A673 (cell line): ENCODE measurements at regions of chr7 and their contacts with region 1.

Region 1: DNA sequence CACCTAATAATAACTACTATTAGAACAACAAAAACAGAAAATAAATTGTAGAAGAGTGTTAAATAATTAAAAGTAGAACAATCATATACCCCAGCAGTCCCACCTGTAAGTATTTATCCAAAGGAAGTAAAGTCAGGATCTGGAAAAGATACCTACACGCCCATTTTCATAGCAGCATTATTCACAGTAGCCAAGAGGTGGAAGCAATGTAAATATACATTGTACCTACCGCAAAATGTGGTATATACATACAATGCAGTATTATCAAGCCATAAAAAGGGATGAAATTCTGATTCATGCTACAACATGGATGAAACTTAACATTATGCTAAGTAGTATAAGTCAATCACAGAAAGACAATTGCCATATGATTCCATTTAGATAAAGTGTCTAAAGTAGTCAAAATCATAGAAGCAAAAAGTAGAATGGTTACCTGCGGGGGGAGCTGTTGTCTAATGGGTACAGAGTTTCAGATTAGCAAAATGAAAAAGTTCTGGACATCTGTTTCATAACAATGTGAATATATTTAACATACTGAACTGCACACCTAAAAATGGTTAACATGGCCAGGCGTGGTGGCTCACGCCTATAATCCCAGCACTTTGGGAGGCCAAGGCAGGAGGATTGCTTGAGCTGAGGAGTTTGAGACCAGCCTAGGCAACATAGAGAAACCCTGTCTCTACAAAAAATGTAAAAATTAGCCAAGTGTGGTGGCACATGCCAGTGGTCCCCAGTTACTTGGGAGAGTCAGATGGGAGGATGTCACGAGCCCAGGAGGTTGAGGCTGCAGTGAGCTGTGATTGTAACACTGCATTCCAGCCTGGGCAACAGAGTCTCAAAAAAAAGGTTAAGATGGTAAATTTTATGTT is 6.0 kb upstream of the TMED4 start:
- DNase-seq: peak; percentile 67
- H3K4me3 ChIP-seq: no peak overlapping the region
- H3K27ac ChIP-seq: no peak overlapping the region
- H3K4me1 ChIP-seq: no peaks in the 10 kb centered on the region
- H3K27me3 ChIP-seq: no peaks in the 10 kb centered on the region
- CTCF ChIP-seq: peak; percentile 67

Region 2: DNA sequence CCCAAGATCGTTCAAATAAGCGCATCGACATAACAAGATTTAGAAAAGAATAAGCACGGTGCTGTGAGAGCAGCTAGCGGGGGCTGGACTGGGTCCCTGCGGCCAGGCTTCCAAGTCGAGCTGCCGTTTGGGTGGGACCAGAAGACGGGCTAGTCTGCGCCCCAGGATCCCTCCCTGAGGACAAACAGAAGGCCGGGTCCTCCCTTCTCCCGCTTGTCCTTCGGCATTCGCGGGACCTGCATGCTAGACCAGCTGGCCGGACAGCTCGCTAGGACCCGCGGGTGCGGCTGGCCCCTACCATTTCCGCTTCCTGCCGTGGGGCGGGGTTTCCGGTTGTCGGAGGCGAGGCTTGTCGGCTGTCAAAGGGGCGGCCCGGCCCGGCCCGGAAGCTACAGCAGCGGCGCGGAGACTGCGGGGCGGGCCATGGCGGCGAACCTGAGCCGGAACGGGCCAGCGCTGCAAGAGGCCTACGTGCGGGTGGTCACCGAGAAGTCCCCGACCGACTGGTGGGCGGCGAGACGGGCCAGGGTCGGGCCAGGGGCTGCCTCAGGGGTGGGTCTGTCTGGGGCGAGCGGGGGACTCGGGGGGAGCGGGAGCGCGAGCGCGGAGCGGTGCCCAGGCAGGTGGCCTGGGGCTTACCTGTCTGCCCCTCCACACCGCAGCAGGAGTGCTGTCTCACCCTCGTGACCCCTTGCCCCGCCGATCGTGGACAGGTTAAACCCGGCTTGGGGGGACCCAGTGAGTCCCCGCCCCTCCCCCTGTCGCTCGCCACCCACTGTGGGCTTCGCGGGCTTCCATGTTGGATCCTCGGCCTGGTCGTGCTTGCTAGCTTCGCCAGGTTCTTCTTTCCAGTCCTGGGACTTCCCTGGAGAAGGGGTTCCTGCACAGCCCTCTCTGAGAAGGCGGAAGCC is 543.5 kb before region 1 on chr7 and contains the start of gene DBNL:
- CTCF ChIA-PET with region 1: no interaction called
- POLR2A ChIA-PET with region 1: no interaction called
- intact Hi-C with region 1: no loop called
- DNase-seq: peak; percentile 91
- H3K4me3 ChIP-seq: peak within 1 kb of the TSS; percentile 90
- H3K27ac ChIP-seq: peak within 1 kb of the TSS; percentile 79
- H3K4me1 ChIP-seq: peaks cover 8% of the 10 kb centered on the region
- H3K27me3 ChIP-seq: no peaks in the 10 kb centered on the region
- CTCF ChIP-seq: no peak
- total RNA-seq, gene DBNL: 64.5 and 74.4 TPM in 2 replicates

Region 3: DNA sequence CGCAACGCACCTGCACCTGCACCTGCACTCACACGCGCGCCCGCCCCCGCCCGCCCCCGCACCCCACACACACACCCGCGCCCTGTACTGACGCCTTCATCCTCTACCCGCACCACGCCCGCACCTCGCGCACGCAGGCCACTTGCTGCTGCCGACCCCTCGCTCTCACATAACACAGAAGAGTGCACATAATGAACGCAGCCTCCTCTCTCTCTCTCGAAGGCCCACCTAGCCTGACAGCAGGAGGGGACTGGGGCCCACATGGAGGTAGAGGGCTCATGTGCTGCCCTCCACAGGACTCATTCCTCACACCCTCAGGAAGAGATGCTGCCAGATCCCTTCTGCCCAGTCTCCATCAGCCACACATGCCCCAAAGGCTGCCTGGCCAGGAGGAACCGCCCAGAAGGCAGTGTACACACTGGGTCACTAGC is 262.3 kb before region 1 on chr7:
- CTCF ChIA-PET with region 1: no interaction called
- POLR2A ChIA-PET with region 1: no interaction called
- intact Hi-C with region 1: no loop called
- DNase-seq: no peak
- H3K4me3 ChIP-seq: no peak overlapping the region
- H3K27ac ChIP-seq: no peak overlapping the region
- H3K4me1 ChIP-seq: no peaks in the 10 kb centered on the region
- H3K27me3 ChIP-seq: peaks cover 36% of the 10 kb centered on the region
- CTCF ChIP-seq: no peak

Region 4: DNA sequence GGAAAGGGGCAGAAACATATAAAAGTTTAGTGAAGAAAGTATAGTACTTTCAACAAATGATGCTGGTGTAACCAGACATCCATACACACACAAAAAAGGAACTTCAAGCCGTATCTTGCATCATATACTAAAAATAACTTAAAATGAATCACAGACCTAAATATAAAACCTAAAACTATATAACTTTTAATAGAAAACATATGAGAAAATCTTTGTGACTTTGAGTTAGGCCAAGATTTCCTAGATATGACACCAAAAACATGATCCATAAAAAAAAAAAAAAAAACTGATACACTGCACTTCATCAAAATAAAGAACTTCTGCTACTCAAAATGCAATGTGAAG is 138.5 kb before region 1 on chr7:
- CTCF ChIA-PET with region 1: no interaction called
- POLR2A ChIA-PET with region 1: no interaction called
- intact Hi-C with region 1: no loop called
- DNase-seq: no peak
- H3K4me3 ChIP-seq: no peak overlapping the region
- H3K27ac ChIP-seq: no peak overlapping the region
- H3K4me1 ChIP-seq: no peaks in the 10 kb centered on the region
- H3K27me3 ChIP-seq: no peaks in the 10 kb centered on the region
- CTCF ChIP-seq: no peak

Region 5: DNA sequence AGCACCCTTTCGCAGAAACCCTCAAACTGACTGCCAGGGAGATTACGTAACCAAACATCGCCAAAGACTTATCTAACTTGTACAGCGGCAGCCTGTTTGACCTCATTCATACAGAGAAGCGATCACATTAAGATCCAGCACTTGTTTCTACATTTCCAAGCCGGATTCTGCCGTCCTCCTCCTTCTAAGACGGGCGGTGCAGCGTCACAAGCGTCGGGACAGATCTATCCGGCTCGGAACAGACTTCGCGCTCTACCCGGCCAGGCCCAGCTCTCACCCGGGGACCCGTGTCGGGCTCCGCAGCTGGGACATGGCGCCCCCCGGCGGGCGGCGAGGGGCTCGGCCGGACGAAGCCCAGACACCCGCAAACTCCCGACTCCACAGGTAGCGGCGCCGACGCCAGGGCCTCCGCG is 259.4 kb after region 1 on chr7:
- CTCF ChIA-PET with region 1: interaction called, 3 read pairs
- POLR2A ChIA-PET with region 1: no interaction called
- intact Hi-C with region 1: loop called (anchors 2 kb)
- DNase-seq: peak; percentile 91
- H3K4me3 ChIP-seq: peak overlapping the region; percentile 77
- H3K27ac ChIP-seq: peak overlapping the region; percentile 98
- H3K4me1 ChIP-seq: peaks cover 20% of the 10 kb centered on the region
- H3K27me3 ChIP-seq: no peaks in the 10 kb centered on the region
- CTCF ChIP-seq: peak; percentile 80

Region 6: DNA sequence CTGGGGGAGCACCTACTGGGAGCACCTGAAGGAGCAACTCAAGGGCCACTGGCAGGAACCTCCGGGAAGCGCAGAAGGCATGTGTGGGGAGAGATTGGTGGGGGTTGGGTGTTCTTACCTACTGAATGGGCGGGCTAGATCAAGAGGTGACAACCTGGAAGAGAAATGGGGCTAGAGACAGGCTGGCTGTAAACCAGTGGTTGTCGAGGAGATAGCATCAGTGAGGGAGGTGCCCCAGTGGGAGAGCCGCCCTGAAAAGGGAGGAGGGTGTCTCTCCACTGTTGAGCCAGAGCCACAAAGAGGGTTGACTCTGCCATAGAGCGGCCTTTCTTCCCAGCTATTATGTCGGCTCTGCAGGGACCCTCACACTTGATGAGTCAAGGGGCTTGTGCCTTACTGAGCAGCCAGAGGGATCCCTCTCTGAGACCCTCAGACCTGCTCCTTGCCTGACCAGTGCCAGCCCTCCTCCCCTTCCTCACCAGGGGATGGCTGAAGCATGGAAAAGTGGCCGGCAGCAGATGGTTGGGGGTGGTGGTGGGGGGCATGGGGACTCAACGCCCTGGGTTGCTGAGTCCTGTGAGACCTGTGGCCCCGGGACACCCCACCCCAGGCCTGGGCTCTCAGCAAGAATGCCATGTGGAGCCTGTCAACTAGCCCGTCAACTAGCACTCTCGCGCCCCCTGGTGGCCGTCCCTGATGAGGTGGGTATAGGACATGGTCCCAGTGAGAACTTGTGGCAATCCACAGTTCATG is 333.7 kb after region 1 on chr7:
- CTCF ChIA-PET with region 1: no interaction called
- POLR2A ChIA-PET with region 1: no interaction called
- intact Hi-C with region 1: loop called (anchors 1 kb)
- DNase-seq: peak; percentile 83
- H3K4me3 ChIP-seq: no peak overlapping the region
- H3K27ac ChIP-seq: no peak overlapping the region
- H3K4me1 ChIP-seq: no peaks in the 10 kb centered on the region
- H3K27me3 ChIP-seq: no peaks in the 10 kb centered on the region
- CTCF ChIP-seq: peak; percentile 90